ENCODE measurements at regions of chr3 and their contacts with region 1.

Region 1: GRCh38 chr3:196632046-196632751 is 7.3 kb upstream of the NRROS start:
- DNase-seq: peak; percentile 91 to 94 (median 92)
- H3K4me3 ChIP-seq: peak overlapping the region; percentile 24 to 77
- H3K4me3 Mint-ChIP-seq: peak overlapping the region; percentile 80 to 93 (median 86)
- H3K27ac ChIP-seq: peak overlapping the region; percentile 69
- H3K27ac Mint-ChIP-seq: peak overlapping the region; percentile 94 to 98 (median 96)
- H3K4me1 ChIP-seq: peaks cover 57% of the 10 kb centered on the region
- H3K4me1 Mint-ChIP-seq: peaks cover 34 to 70% (median 52%) of the 10 kb centered on the region in 4 donors
- H3K27me3 ChIP-seq: no peaks in the 10 kb centered on the region
- H3K27me3 Mint-ChIP-seq: no peaks in the 10 kb centered on the region

Region 2: GRCh38 chr3:196537319-196537984 is 94.7 kb before region 1 on chr3:
- CTCF ChIA-PET with region 1: interaction called, 5 read pairs
- POLR2A ChIA-PET with region 1: no interaction called
- intact Hi-C with region 1: loop called (anchors 5 kb)
- DNase-seq: peak; percentile 40 to 62 (median 49)
- H3K4me3 ChIP-seq: no peak overlapping the region
- H3K4me3 Mint-ChIP-seq: no peak overlapping the region
- H3K27ac ChIP-seq: no peak overlapping the region
- H3K27ac Mint-ChIP-seq: peak overlapping the region in 1 of 7 donors; percentile 19
- H3K4me1 ChIP-seq: no peaks in the 10 kb centered on the region
- H3K4me1 Mint-ChIP-seq: peaks cover 0 to 3% (median 1%) of the 10 kb centered on the region in 4 donors
- H3K27me3 ChIP-seq: no peaks in the 10 kb centered on the region
- H3K27me3 Mint-ChIP-seq: peaks cover 0 to 2% of the 10 kb centered on the region in 2 donors

Region 3: GRCh38 chr3:196670339-196670738 is 38.1 kb after region 1 on chr3:
- CTCF ChIA-PET with region 1: interaction called, 5 read pairs
- POLR2A ChIA-PET with region 1: interaction called, 16 read pairs
- intact Hi-C with region 1: loop called (anchors 5 kb)
- DNase-seq: no peak
- H3K4me3 ChIP-seq: peak overlapping the region in 1 of 2 donors; percentile 23
- H3K4me3 Mint-ChIP-seq: peak overlapping the region; percentile 66 to 84 (median 81)
- H3K27ac ChIP-seq: peak overlapping the region; percentile 23
- H3K27ac Mint-ChIP-seq: peak overlapping the region; percentile 67 to 96 (median 90)
- H3K4me1 ChIP-seq: peaks cover 25% of the 10 kb centered on the region
- H3K4me1 Mint-ChIP-seq: peaks cover 15 to 44% (median 28%) of the 10 kb centered on the region in 4 donors
- H3K27me3 ChIP-seq: no peaks in the 10 kb centered on the region
- H3K27me3 Mint-ChIP-seq: no peaks in the 10 kb centered on the region

Region 4: GRCh38 chr3:196677353-196677752 is 45.2 kb after region 1 on chr3:
- CTCF ChIA-PET with region 1: interaction called, 9 read pairs
- POLR2A ChIA-PET with region 1: interaction called, 12 read pairs
- intact Hi-C with region 1: loop called (anchors 5 kb)
- DNase-seq: no peak
- H3K4me3 ChIP-seq: no peak overlapping the region
- H3K4me3 Mint-ChIP-seq: peak overlapping the region in 1 of 8 donors; percentile 36
- H3K27ac ChIP-seq: no peak overlapping the region
- H3K27ac Mint-ChIP-seq: peak overlapping the region in 3 of 7 donors; percentile 29 to 64 (median 59)
- H3K4me1 ChIP-seq: peaks cover 16% of the 10 kb centered on the region
- H3K4me1 Mint-ChIP-seq: peaks cover 14 to 25% (median 15%) of the 10 kb centered on the region in 4 donors
- H3K27me3 ChIP-seq: no peaks in the 10 kb centered on the region
- H3K27me3 Mint-ChIP-seq: no peaks in the 10 kb centered on the region

Region 5: DNA sequence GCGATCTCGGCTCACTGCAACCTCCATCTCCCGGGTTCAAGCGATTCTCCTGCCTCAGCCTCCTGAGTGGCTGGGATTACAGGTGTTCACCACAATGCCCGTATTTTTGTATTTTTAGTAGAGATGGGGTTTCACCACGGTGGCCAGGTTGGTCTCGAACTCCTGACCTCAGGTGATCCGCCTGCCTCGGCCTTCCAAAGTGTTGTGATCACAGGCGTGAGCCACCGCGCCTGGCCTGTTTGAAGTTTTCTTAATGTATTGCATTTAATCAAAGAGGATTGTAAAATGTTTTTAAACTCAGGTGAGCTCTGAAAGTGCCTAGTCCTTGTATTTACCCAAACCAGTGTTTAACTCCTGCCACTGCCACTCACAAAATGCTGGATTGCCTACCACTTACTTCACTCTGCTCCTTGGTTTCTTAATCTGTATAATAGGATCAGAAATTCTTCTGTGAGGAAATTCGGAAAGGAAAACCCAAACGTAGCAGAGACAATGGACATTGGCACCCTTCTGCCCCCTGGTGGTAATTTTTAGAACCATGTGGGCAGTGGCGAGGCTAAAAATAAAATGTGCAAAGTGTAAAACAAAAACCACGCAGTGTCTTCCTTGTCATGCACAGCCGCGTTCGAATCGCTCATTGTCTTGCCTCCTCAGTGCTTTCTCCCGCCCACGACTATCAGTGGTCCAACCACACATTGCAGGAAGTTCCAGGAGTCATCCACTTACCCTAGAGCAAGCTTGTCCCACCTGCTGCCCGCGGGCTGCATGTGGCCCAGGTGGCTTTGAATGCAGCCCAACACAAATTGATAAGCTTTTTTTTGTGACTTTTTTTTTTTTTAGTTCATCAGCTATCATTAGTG is 52.6 kb after region 1 on chr3:
- CTCF ChIA-PET with region 1: interaction called, 36 read pairs
- POLR2A ChIA-PET with region 1: interaction called, 25 read pairs
- intact Hi-C with region 1: loop called (anchors 1 kb)
- DNase-seq: peak; percentile 61 to 75 (median 65)
- H3K4me3 ChIP-seq: peak overlapping the region in 1 of 2 donors; percentile 40
- H3K4me3 Mint-ChIP-seq: peak overlapping the region; percentile 39 to 80 (median 70)
- H3K27ac ChIP-seq: no peak overlapping the region
- H3K27ac Mint-ChIP-seq: peak overlapping the region in 5 of 7 donors; percentile 19 to 81 (median 64)
- H3K4me1 ChIP-seq: peaks cover 11% of the 10 kb centered on the region
- H3K4me1 Mint-ChIP-seq: peaks cover 10 to 16% (median 14%) of the 10 kb centered on the region in 4 donors
- H3K27me3 ChIP-seq: no peaks in the 10 kb centered on the region
- H3K27me3 Mint-ChIP-seq: no peaks in the 10 kb centered on the region

Region 6: GRCh38 chr3:196711838-196712513 is 79.8 kb after region 1 on chr3 and contains the starts of genes CEP19 and PIGX:
- CTCF ChIA-PET with region 1: interaction called, 3 read pairs
- POLR2A ChIA-PET with region 1: interaction called, 12 read pairs
- intact Hi-C with region 1: loop called (anchors 1 kb)
- DNase-seq: peak; percentile 93 to 98 (median 96)
- H3K4me3 ChIP-seq: peak within 1 kb of the TSS; percentile 68 to 87
- H3K4me3 Mint-ChIP-seq: peak within 1 kb of the TSS; percentile 85 to 98 (median 96)
- H3K27ac ChIP-seq: peak within 1 kb of the TSS; percentile 99
- H3K27ac Mint-ChIP-seq: peak within 1 kb of the TSS; percentile 93 to 100 (median 99)
- H3K4me1 ChIP-seq: peaks cover 21% of the 10 kb centered on the region
- H3K4me1 Mint-ChIP-seq: peaks cover 12 to 33% (median 24%) of the 10 kb centered on the region in 4 donors
- H3K27me3 ChIP-seq: no peaks in the 10 kb centered on the region
- H3K27me3 Mint-ChIP-seq: no peaks in the 10 kb centered on the region
- total RNA-seq, gene CEP19: 7.8 to 8.2 TPM
- total RNA-seq, gene PIGX: 19.1 to 23.7 TPM